SK-N-SH (cell line): ENCODE measurements at regions of chr2 and their contacts with region 1.

Region 1: DNA sequence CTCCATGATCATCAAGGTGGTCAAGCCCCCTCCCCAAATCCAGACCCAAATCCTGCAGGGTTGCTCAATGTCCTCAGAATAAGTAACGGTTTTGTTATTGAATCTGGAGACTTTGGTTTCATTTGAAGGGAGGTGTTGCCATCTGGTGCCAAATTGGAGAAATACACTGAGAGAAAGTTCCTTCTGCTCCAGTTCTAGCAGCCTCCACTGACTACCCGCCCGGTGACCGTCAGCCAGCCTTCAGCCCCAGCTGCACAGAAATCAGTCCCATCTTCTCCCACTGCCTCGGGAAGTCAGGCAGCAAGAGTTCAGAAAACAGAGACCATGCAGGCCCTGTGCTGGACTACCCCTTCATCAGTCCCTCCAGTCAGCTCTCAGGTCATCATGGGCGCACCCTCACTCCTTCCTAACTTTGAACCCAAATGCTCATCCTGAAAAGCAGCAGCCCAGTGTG is 38.7 kb downstream of the PKDCC start:
- DNase-seq: peak; percentile 87
- H3K4me3 ChIP-seq: no peak overlapping the region
- H3K27ac ChIP-seq: no peak overlapping the region
- H3K4me1 ChIP-seq: peaks cover 0 to 6% of the 10 kb centered on the region in 2 experiments; a peak in 2 of 4 replicates
- H3K27me3 ChIP-seq: no peaks in the 10 kb centered on the region
- CTCF ChIP-seq: peak; percentile 86
- EP300 ChIP-seq: no peak
- RAD21 ChIP-seq: peak; percentile 99

Region 2: GRCh38 chr2:41741951-41742595 is 344.5 kb before region 1 on chr2:
- CTCF ChIA-PET with region 1: no interaction called
- POLR2A ChIA-PET with region 1: no interaction called
- DNase-seq: no peak
- H3K4me3 ChIP-seq: no peak overlapping the region
- H3K27ac ChIP-seq: no peak overlapping the region
- H3K4me1 ChIP-seq: no peaks in the 10 kb centered on the region
- H3K27me3 ChIP-seq: no peaks in the 10 kb centered on the region
- CTCF ChIP-seq: no peak
- EP300 ChIP-seq: no peak
- RAD21 ChIP-seq: no peak

Region 3: GRCh38 chr2:41840702-41841551 is 245.6 kb before region 1 on chr2:
- CTCF ChIA-PET with region 1: interaction called, 446 read pairs
- POLR2A ChIA-PET with region 1: interaction called, 6 read pairs
- DNase-seq: peak; percentile 96
- H3K4me3 ChIP-seq: peak overlapping the region; percentile 79 to 98
- H3K27ac ChIP-seq: peak overlapping the region; percentile 9 to 91; a peak in 3 of 4 replicates
- H3K4me1 ChIP-seq: peaks cover 0 to 10% of the 10 kb centered on the region in 2 experiments; a peak in 2 of 4 replicates
- H3K27me3 ChIP-seq: no peaks in the 10 kb centered on the region; the same call in 1 of the 2 replicates
- CTCF ChIP-seq: peak; percentile 99
- EP300 ChIP-seq: peak in 1 of 2 experiments; percentile 40; a peak in 1 of 4 replicates
- RAD21 ChIP-seq: peak; percentile 90

Region 4: GRCh38 chr2:41869542-41870264 is 216.8 kb before region 1 on chr2:
- CTCF ChIA-PET with region 1: interaction called, 897 read pairs
- POLR2A ChIA-PET with region 1: interaction called, 7 read pairs
- DNase-seq: peak; percentile 86
- H3K4me3 ChIP-seq: no peak overlapping the region; a peak in 1 of 4 replicates
- H3K27ac ChIP-seq: peak overlapping the region in 1 of 2 experiments; percentile 39; a peak in 1 of 4 replicates
- H3K4me1 ChIP-seq: peaks cover 0 to 26% of the 10 kb centered on the region in 2 experiments; a peak in 3 of 4 replicates
- H3K27me3 ChIP-seq: no peaks in the 10 kb centered on the region
- CTCF ChIP-seq: peak; percentile 91
- EP300 ChIP-seq: 0 out of 4 replicates have a peak, but pooled peaks of 1 of the 2 experiments have one; percentile 16
- RAD21 ChIP-seq: peak; percentile 100

Region 5: DNA sequence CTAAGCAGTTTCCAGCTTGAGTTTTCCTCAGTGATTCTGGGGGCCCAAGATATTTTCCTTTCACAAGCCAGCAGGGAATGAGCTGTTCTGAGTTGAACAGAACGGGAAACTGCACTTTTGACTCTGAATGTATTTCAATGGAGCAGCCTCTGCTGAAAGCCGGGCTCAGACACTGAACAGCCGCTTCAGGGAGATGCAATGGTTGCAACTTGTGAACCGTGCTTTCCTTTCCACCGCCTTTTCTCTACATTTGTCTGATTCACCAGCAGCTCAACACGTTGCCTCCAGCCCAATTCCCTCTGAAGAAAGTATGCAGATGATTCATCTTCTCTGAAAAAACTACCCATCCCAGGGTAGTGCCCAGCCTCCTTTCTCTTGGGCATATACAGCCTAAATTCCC is 158.0 kb before region 1 on chr2:
- CTCF ChIA-PET with region 1: interaction called, 38 read pairs
- POLR2A ChIA-PET with region 1: no interaction called
- DNase-seq: no peak
- H3K4me3 ChIP-seq: no peak overlapping the region
- H3K27ac ChIP-seq: no peak overlapping the region
- H3K4me1 ChIP-seq: peaks cover 3 to 53% of the 10 kb centered on the region in 2 experiments; a peak in 3 of 4 replicates
- H3K27me3 ChIP-seq: no peaks in the 10 kb centered on the region; the same call in 1 of the 2 replicates
- CTCF ChIP-seq: no peak
- EP300 ChIP-seq: no peak
- RAD21 ChIP-seq: no peak

Region 6: DNA sequence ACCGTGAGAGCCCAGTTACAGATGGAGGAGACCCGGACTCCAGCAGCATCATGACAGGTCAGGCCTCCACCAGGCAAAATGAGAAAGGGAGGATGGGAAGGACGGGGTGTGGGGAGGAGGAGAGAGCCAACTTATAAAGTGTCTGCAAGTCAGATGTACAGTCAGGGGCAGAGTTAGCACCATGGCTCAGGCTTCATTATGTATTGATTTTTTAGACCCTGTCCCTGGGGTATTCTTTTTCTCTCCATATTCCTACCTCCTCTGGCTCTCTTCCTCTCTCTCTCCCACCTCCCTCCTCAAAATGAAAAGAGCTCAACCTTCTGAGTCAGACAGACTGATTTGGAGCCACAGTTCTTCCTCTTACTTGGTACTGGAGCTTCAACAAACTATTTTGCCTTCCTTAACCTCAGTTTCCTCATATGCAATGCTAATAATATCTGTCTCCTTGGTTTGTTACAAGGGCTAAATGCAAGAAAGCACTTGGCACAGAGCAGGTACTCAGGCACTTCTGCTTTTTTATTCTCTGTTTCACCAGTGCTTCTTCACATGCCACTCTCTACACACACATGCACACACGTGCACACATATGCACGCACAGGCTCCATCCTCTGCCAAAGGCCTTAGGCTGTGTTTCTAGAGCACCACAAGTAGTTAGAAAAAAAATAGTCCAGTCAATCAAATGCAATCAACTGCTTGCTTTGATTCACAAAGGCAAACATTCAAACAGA is 131.0 kb before region 1 on chr2:
- CTCF ChIA-PET with region 1: interaction called, 29 read pairs
- POLR2A ChIA-PET with region 1: interaction called, 4 read pairs
- DNase-seq: no peak
- H3K4me3 ChIP-seq: peak overlapping the region in 1 of 2 experiments; percentile 35; a peak in 2 of 4 replicates
- H3K27ac ChIP-seq: peak overlapping the region; percentile 36 to 99; a peak in 3 of 4 replicates
- H3K4me1 ChIP-seq: peaks cover 0 to 64% of the 10 kb centered on the region in 2 experiments; a peak in 2 of 4 replicates
- H3K27me3 ChIP-seq: no peaks in the 10 kb centered on the region; the same call in 1 of the 2 replicates
- CTCF ChIP-seq: no peak
- EP300 ChIP-seq: peak in 1 of 2 experiments; percentile 63; a peak in 2 of 4 replicates
- RAD21 ChIP-seq: peak; percentile 15; the same call in 1 of the 2 replicates

Region 7: DNA sequence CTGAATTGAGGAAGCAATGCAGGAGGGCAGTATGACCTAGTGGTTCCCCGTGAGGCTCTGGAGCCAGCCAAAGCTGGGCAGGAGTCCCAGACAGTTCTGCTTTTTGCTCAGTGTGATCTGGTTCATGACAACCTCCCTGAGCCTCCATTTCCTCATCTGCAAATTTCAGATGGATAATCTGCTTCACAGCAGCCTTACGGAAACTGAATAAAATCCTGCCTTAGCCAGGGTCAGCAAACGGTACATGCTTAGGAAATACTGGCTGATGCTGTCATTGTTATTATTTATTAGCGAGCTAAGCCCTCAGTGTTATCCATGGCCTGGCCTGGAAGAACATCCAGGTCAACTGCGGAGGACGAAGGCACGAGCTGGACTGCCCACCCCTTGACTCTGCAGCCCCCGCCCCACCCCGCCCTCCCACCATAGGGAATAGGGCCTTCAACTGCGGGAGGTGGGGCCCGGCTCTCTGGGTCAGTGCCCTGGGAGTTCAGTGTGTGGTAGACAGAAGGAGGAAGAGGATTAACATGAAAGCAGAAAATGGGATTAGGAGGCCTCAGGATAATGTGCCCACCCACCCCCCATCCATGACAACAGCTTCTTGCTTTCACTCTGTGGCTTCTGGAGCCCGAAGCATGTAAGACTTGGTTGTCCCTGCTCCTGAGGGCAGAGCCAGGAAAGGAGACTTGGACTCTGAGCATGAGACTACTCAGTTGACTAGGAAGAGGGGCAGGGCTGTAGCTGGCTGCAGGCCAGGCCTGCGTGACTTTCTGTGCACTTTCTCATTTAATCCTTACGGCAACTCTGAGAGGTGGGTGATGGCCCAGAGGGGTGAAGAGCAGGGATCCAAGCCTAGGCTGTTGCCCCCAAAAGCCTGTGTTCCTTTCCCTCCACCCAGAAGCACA is 25.6 kb before region 1 on chr2:
- CTCF ChIA-PET with region 1: interaction called, 14 read pairs
- POLR2A ChIA-PET with region 1: no interaction called
- DNase-seq: no peak
- H3K4me3 ChIP-seq: no peak overlapping the region
- H3K27ac ChIP-seq: peak overlapping the region in 1 of 2 experiments; percentile 58; a peak in 2 of 4 replicates
- H3K4me1 ChIP-seq: peaks cover 0 to 21% of the 10 kb centered on the region in 2 experiments; a peak in 1 of 4 replicates
- H3K27me3 ChIP-seq: no peaks in the 10 kb centered on the region
- CTCF ChIP-seq: no peak
- EP300 ChIP-seq: no peak
- RAD21 ChIP-seq: no peak

Region 8: GRCh38 chr2:42196403-42197267 is 110.1 kb after region 1 on chr2:
- CTCF ChIA-PET with region 1: interaction called, 13 read pairs
- POLR2A ChIA-PET with region 1: no interaction called
- DNase-seq: peak; percentile 77
- H3K4me3 ChIP-seq: no peak overlapping the region; a peak in 1 of 4 replicates
- H3K27ac ChIP-seq: peak overlapping the region; percentile 4 to 94; a peak in 3 of 4 replicates
- H3K4me1 ChIP-seq: peaks cover 31 to 42% of the 10 kb centered on the region in 2 experiments; a peak in 3 of 4 replicates
- H3K27me3 ChIP-seq: no peaks in the 10 kb centered on the region
- CTCF ChIP-seq: peak; percentile 59
- EP300 ChIP-seq: peak in 1 of 2 experiments; percentile 93; a peak in 2 of 4 replicates
- RAD21 ChIP-seq: peak; percentile 90

Region 9: GRCh38 chr2:42722320-42723190 is 636.0 kb after region 1 on chr2:
- CTCF ChIA-PET with region 1: no interaction called
- POLR2A ChIA-PET with region 1: no interaction called
- DNase-seq: no peak
- H3K4me3 ChIP-seq: no peak overlapping the region
- H3K27ac ChIP-seq: peak overlapping the region in 1 of 2 experiments; percentile 42; a peak in 2 of 4 replicates
- H3K4me1 ChIP-seq: no peaks in the 10 kb centered on the region
- H3K27me3 ChIP-seq: no peaks in the 10 kb centered on the region
- CTCF ChIP-seq: no peak
- EP300 ChIP-seq: no peak
- RAD21 ChIP-seq: no peak